ENCODE measurements at regions of chr7 and their contacts with region 1.

Region 1: DNA sequence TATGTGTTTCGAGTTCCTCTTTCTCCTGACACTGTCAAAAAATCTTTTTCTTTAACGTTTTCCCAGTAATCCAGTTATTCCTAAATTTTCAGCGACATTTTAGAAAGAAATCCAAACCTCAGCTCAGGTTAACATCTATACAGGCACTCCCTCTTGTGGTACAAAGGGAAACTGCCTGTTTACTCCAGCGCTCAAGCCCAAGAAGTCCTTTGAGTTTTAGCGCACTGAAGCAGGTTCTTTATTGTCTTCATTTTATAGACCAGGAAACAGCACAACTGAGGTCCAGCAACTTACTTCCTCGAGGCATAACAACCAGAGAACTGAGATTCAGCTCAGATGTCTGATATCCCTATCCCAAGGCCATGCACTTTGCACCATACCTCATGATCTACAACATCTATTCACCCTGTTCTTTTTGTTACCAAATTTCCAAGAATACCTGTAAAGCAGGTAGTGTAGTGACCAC is 287.2 kb upstream of the MKLN1 start:
- DNase-seq: peak in 1 of 2 donors; percentile 36
- ATAC-seq: peak; percentile 63 to 78
- H3K4me3 ChIP-seq: no peak overlapping the region
- H3K27ac ChIP-seq: peak overlapping the region; percentile 39 to 66 (median 60)
- H3K4me1 ChIP-seq: peaks cover 73 to 75% of the 10 kb centered on the region in 2 donors
- H3K27me3 ChIP-seq: no peaks in the 10 kb centered on the region
- CTCF ChIP-seq: peak; percentile 62 to 87 (median 80)
- POLR2A ChIP-seq: no peak

Region 2: GRCh38 chr7:130865408-130866236 is 174.9 kb before region 1 on chr7:
- in situ Hi-C with region 1: loop called in 1 of 4 experiments (anchors 25 kb)
- intact Hi-C with region 1: no loop called
- DNase-seq: no peak
- ATAC-seq: no peak
- H3K4me3 ChIP-seq: no peak overlapping the region
- H3K27ac ChIP-seq: no peak overlapping the region
- H3K4me1 ChIP-seq: no peaks in the 10 kb centered on the region
- H3K27me3 ChIP-seq: no peaks in the 10 kb centered on the region
- CTCF ChIP-seq: no peak
- POLR2A ChIP-seq: no peak

Region 3: GRCh38 chr7:130896898-130897514 is 143.5 kb before region 1 on chr7:
- in situ Hi-C with region 1: loop called in 1 of 4 experiments (anchors 25 kb)
- intact Hi-C with region 1: no loop called
- DNase-seq: peak in 1 of 2 donors; percentile 76
- ATAC-seq: peak; percentile 7 to 15
- H3K4me3 ChIP-seq: peak overlapping the region in 1 of 4 donors; percentile 5
- H3K27ac ChIP-seq: peak overlapping the region; percentile 91 to 97 (median 94)
- H3K4me1 ChIP-seq: peaks cover 94 to 95% of the 10 kb centered on the region in 2 donors
- H3K27me3 ChIP-seq: no peaks in the 10 kb centered on the region
- CTCF ChIP-seq: peak; percentile 73 to 87 (median 84)
- POLR2A ChIP-seq: no peak

Region 4: GRCh38 chr7:131004371-131004770 is 36.1 kb before region 1 on chr7:
- in situ Hi-C with region 1: no loop called
- intact Hi-C with region 1: loop called (anchors 5 kb)
- DNase-seq: no peak
- ATAC-seq: peak in 1 of 2 donors; percentile 34
- H3K4me3 ChIP-seq: no peak overlapping the region
- H3K27ac ChIP-seq: peak overlapping the region in 2 of 4 donors; percentile 14 to 39
- H3K4me1 ChIP-seq: peaks cover 59 to 75% of the 10 kb centered on the region in 2 donors
- H3K27me3 ChIP-seq: no peaks in the 10 kb centered on the region
- CTCF ChIP-seq: no peak
- POLR2A ChIP-seq: no peak

Region 5: DNA sequence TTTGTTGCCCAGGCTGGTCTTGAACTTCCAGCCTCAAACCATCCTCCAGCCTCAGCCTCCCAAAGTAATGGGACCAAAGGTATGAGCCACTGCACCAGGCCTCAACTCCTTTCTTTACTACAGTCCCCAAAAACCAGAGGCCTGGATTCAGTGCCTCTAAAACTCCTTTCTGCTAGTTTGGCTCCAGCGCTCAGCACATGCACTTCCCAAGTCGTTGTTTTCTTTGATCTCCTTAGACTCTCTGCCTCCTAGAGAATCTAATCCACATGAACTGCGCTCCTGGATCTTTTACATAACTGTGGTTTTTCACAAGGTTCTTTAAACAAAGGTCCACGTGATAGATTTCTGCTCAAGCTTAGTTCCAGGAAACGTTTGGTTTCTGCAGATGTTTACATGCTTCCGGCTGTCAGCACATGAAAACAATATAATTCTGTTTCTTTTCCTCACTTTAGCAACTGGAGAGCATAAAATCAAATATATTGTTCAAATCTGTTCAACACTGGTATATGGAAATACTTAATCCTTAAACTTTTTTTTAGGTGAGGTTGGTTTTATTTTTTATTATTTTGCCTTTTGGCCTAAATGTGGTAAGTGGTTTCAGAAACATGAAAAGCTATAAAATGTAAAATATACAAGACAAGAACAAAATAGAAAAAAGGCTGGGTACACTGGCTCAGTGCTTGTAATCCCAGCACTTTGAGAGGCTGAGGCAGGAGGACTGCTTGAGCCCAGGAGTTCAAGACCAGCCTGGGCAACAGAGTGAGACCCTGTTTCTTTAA is 16.7 kb after region 1 on chr7:
- in situ Hi-C with region 1: no loop called
- intact Hi-C with region 1: loop called (anchors 2 kb)
- DNase-seq: no peak
- ATAC-seq: peak; percentile 26 to 43
- H3K4me3 ChIP-seq: peak overlapping the region in 1 of 4 donors; percentile 2
- H3K27ac ChIP-seq: peak overlapping the region; percentile 3 to 58 (median 54)
- H3K4me1 ChIP-seq: peaks cover 69 to 73% of the 10 kb centered on the region in 2 donors
- H3K27me3 ChIP-seq: no peaks in the 10 kb centered on the region
- CTCF ChIP-seq: no peak
- POLR2A ChIP-seq: no peak

Measured in gastrocnemius medialis (tissue), 4 donors.